B cell (primary cell): ENCODE measurements at regions of chr2 and their contacts with region 1.

Region 1: GRCh38 chr2:215812966-215813365 is 200.4 kb downstream of the MREG start:
- DNase-seq: no peak
- ATAC-seq: no peak
- H3K4me3 ChIP-seq: no peak overlapping the region
- H3K4me3 Mint-ChIP-seq: no peak overlapping the region
- H3K27ac ChIP-seq: no peak overlapping the region
- H3K27ac Mint-ChIP-seq: no peak overlapping the region
- H3K4me1 ChIP-seq: peaks cover 31% of the 10 kb centered on the region in 2 donors
- H3K4me1 Mint-ChIP-seq: peaks cover 33% of the 10 kb centered on the region
- H3K27me3 ChIP-seq: peaks cover 0 to 10% (median 4%) of the 10 kb centered on the region in 4 experiments
- H3K27me3 Mint-ChIP-seq: peaks cover 10% of the 10 kb centered on the region
- CTCF ChIP-seq: no peak

Region 2: GRCh38 chr2:215828517-215829184 is 15.7 kb after region 1 on chr2:
- CTCF ChIA-PET with region 1: interaction called, 11 read pairs
- POLR2A ChIA-PET with region 1: no interaction called
- intact Hi-C with region 1: no loop called
- DNase-seq: peak; percentile 55
- ATAC-seq: peak; percentile 64
- H3K4me3 ChIP-seq: no peak overlapping the region
- H3K4me3 Mint-ChIP-seq: no peak overlapping the region
- H3K27ac ChIP-seq: no peak overlapping the region
- H3K27ac Mint-ChIP-seq: no peak overlapping the region
- H3K4me1 ChIP-seq: no peaks in the 10 kb centered on the region
- H3K4me1 Mint-ChIP-seq: no peaks in the 10 kb centered on the region
- H3K27me3 ChIP-seq: no peaks in the 10 kb centered on the region
- H3K27me3 Mint-ChIP-seq: peaks cover 7% of the 10 kb centered on the region
- CTCF ChIP-seq: peak; percentile 70